ENCODE measurements at regions of chr7 and their contacts with region 1.

Region 1: DNA sequence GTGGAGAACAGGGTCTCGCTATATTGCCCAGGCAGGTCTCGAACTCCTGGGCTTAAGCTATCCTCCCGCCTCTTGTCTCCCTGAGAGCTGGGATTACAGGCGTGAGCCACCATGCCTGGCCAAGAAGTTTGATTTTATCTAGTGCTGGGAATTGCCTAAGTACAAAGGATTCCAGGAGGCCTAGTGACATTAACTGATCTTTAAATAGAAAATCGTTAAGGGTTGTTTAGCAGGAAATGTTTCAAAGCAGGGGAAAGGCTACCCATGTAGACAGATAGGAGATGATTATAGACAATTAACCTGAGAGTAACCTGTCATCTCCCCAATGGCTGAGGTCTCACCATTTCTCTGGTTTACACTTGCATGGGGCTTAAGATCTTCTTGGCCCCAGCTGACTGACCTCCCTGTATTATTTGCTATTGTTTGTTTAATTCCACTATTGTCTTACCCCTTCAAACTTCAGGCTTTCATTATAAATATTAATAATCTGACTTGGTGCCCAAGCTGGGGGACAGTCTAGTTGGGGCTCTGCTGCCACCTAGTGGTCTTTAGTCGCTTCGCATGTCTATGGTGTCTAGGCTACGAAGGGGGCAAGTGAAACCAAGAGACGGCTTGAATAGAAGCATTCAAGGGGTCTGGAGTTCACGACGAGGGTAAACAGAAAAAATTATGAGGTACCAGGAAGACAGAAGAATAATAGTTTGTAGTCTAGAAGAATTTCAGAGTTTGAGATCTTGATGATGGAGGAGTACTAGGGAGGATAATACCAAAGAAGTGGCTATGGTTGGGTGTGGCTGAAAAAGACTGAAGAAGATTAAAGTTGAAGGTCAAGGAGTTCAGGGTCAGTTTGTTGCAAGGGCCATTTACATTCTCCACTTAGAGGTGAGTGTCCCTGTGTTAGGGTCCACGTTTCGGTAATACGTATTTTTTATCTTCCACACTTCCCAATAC is 40.4 kb upstream of the BPGM start:
- DNase-seq: peak; percentile 60 to 64
- H3K4me3 ChIP-seq: no peak overlapping the region
- H3K27ac ChIP-seq: peak overlapping the region in 1 of 3 donors; percentile 6
- H3K4me1 ChIP-seq: peaks cover 3 to 14% of the 10 kb centered on the region in 2 donors
- H3K27me3 ChIP-seq: no peaks in the 10 kb centered on the region
- CTCF ChIP-seq: peak; percentile 80 to 94 (median 85)
- POLR2A ChIP-seq: no peak

Region 2: DNA sequence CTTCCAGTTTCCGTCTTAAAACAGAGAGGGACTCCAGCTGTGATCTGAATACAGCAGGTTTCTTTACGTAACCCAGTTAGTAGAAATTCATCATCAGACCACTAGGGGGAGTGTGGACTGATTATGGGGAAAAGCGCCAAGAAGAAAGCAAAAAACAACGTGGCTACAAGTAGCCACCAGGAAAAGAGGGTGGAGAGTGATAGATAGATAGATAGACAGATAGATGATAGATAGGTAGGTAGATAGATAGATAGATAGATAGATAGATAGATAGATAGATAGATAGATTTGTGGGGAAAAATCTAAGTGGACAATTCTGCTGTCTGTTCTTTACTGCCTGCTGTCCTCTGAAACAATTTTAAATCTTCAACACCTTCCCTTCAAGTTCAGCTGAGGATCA is 91.6 kb before region 1 on chr7:
- intact Hi-C with region 1: loop called (anchors 2 kb)
- DNase-seq: no peak
- H3K4me3 ChIP-seq: no peak overlapping the region
- H3K27ac ChIP-seq: no peak overlapping the region
- H3K4me1 ChIP-seq: peaks cover 0 to 3% of the 10 kb centered on the region in 2 donors
- H3K27me3 ChIP-seq: no peaks in the 10 kb centered on the region
- CTCF ChIP-seq: peak; percentile 57 to 92 (median 74)
- POLR2A ChIP-seq: no peak

Region 3: DNA sequence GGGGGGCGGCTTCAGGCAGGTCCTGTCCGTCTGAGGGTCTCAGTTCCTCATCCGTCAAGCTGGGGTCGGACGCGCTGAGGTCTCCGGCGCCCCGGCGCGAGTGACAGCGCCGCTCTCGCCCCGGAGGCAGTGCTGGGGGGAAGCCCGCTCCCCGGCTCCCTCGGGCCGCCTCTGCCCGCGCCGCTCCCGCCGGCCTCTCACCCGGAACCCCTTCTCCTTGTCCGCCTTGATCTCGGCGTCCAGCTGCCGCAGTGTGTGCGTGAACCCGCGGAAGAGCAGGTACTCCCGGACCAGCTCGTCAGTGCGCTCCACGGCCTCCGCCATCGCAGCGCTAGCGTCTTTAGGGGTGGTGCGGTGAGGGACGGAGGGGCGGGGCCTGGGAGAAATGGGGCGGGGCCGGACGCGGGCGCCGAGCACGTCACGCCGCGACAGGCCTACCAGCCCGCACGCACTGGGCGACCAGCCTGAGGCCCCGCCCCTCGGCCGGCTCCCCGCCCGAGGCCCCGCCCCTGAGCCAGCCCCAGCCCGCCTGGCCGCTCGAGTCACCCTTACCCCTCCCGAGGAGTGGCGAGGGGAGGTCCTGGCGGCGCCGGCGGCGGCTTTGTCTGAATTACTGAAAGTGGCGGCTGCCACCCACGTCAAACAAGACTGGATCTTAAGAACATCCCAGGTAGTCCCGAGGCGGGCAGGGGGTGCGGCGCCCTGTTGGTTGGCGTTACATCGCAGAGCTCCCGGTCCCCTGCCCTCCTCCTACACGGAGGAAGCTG is 605.1 kb after region 1 on chr7 and contains the start of gene WDR91:
- intact Hi-C with region 1: no loop called
- DNase-seq: peak; percentile 95 to 96
- H3K4me3 ChIP-seq: peak within 1 kb of the TSS; percentile 43 to 97 (median 71)
- H3K27ac ChIP-seq: peak within 1 kb of the TSS; percentile 70 to 91 (median 73)
- H3K4me1 ChIP-seq: peaks cover 0 to 5% of the 10 kb centered on the region in 2 donors
- H3K27me3 ChIP-seq: no peaks in the 10 kb centered on the region
- CTCF ChIP-seq: peak in 2 of 6 experiments; percentile 4 to 19
- POLR2A ChIP-seq: peak in 1 of 2 donors; percentile 93
- total RNA-seq, gene WDR91: 8.4 to 34.4 (median 9.1) TPM

Measured in thyroid gland (tissue), 4 donors.